BJ (cell line): ENCODE measurements at regions of chr1 and their contacts with region 1.

Region 1: GRCh38 chr1:84936116-84936810 is 43.3 kb upstream of the LPAR3 start:
- DNase-seq: no peak
- H3K4me3 ChIP-seq: no peak overlapping the region
- H3K27me3 ChIP-seq: no peaks in the 10 kb centered on the region; the same call in 1 of the 2 replicates
- CTCF ChIP-seq: peak; percentile 82

Region 2: GRCh38 chr1:84442256-84442655 is 494.0 kb before region 1 on chr1:
- CTCF ChIA-PET with region 1: interaction called, 12 read pairs
- POLR2A ChIA-PET with region 1: no interaction called
- DNase-seq: peak; percentile 76
- H3K4me3 ChIP-seq: no peak overlapping the region
- H3K27me3 ChIP-seq: no peaks in the 10 kb centered on the region
- CTCF ChIP-seq: peak; percentile 52; the same call in 1 of the 2 replicates

Region 3: GRCh38 chr1:84753516-84754385 is 182.5 kb before region 1 on chr1:
- CTCF ChIA-PET with region 1: interaction called, 17 read pairs
- POLR2A ChIA-PET with region 1: no interaction called
- DNase-seq: no peak
- H3K4me3 ChIP-seq: no peak overlapping the region
- H3K27me3 ChIP-seq: no peaks in the 10 kb centered on the region
- CTCF ChIP-seq: peak; percentile 98

Region 4: DNA sequence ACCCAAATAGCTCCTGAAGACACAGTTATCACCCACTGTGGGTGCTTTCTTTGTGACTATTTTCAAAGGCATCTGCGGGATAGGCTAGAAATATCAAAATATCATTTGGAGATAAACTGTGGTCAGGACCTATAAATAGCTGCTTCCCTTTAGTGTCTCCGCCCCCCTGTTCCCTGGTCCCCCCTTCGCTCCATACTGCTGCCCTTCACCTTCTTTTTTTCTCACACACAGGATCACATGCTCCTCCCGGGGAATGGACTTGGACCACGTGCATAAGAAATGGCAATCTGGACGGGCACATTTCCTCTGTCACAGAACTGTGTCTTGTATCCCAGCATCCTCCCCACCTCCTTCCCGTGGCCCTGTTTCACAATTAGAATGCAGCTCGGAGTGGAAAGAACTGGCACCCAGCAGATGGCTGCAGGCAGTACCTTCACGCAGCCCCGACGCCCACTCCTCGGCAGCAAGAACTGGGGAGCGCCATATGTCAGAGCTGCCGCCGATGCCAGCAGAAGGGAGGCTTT is 177.2 kb before region 1 on chr1:
- CTCF ChIA-PET with region 1: interaction called, 17 read pairs
- POLR2A ChIA-PET with region 1: no interaction called
- DNase-seq: no peak
- H3K4me3 ChIP-seq: peak overlapping the region; percentile 9
- H3K27me3 ChIP-seq: 0 out of 2 replicates have a peak, but pooled peaks cover 2% of the 10 kb centered on the region
- CTCF ChIP-seq: no peak

Region 5: DNA sequence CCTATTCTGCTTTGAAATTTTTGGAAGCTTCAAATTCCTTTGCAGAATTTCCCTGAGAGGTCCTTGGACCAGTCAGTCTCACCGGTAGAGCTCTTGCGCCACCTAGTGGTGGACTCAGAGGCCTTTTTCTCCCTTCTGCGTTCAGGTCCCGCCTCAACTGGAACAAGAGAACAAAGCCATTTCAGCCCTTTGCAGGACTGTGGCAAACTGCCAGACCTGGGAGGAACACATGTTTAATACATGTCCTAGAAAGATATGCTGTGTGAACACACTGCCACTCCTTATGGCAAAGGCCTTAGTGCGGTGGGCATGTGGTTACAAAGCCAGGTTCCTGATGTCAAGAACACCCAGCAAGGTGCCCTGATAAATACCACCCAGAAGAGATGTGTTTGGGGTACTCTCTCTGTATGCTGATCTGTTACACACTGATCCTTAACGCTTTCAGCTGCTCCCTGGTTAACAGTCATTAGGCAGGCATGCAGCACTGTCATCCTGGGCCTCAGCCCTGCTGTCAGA is 163.8 kb before region 1 on chr1:
- CTCF ChIA-PET with region 1: interaction called, 16 read pairs
- POLR2A ChIA-PET with region 1: no interaction called
- DNase-seq: peak; percentile 18
- H3K4me3 ChIP-seq: no peak overlapping the region
- H3K27me3 ChIP-seq: no peaks in the 10 kb centered on the region; the same call in 1 of the 2 replicates
- CTCF ChIP-seq: peak; percentile 93

Region 6: GRCh38 chr1:84781946-84782771 is 154.1 kb before region 1 on chr1:
- CTCF ChIA-PET with region 1: interaction called, 12 read pairs
- POLR2A ChIA-PET with region 1: no interaction called
- DNase-seq: no peak
- H3K4me3 ChIP-seq: no peak overlapping the region
- H3K27me3 ChIP-seq: 0 out of 2 replicates have a peak, but pooled peaks cover 3% of the 10 kb centered on the region
- CTCF ChIP-seq: peak; percentile 58

Region 7: DNA sequence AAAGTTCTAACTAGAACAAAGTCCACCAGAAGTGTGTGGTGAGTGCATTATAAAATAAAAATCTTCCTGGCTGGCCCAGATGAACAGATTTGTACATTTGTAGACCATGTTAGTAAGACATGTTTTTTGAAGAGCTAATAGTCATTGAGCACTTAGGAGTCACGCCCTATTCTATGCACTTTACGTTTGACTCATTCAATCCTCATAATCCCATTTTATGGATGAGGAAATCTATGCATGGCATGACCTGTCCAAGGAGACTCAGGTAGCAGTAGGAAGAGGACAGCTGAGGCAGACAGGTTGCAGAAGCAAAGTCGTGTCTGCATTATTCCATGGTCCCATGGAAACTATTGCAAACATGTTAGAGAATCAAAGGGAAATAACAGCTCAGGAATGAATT is 12.9 kb before region 1 on chr1:
- CTCF ChIA-PET with region 1: interaction called, 11 read pairs
- POLR2A ChIA-PET with region 1: no interaction called
- DNase-seq: no peak
- H3K4me3 ChIP-seq: no peak overlapping the region
- H3K27me3 ChIP-seq: peaks cover 3% of the 10 kb centered on the region
- CTCF ChIP-seq: no peak